ENCODE measurements at regions of chr10 and their contacts with region 1.

Region 1: GRCh38 chr10:118754720-118755480 is at the start of gene CACUL1:
- DNase-seq: peak; percentile 100
- ATAC-seq: peak; percentile 98
- H3K4me3 Mint-ChIP-seq: peak within 1 kb of the TSS; percentile 91
- H3K27ac Mint-ChIP-seq: peak within 1 kb of the TSS; percentile 83
- H3K4me1 Mint-ChIP-seq: peaks cover 33% of the 10 kb centered on the region
- H3K27me3 Mint-ChIP-seq: no peaks in the 10 kb centered on the region
- total RNA-seq, gene CACUL1: 20.1 to 24.4 TPM

Region 2: DNA sequence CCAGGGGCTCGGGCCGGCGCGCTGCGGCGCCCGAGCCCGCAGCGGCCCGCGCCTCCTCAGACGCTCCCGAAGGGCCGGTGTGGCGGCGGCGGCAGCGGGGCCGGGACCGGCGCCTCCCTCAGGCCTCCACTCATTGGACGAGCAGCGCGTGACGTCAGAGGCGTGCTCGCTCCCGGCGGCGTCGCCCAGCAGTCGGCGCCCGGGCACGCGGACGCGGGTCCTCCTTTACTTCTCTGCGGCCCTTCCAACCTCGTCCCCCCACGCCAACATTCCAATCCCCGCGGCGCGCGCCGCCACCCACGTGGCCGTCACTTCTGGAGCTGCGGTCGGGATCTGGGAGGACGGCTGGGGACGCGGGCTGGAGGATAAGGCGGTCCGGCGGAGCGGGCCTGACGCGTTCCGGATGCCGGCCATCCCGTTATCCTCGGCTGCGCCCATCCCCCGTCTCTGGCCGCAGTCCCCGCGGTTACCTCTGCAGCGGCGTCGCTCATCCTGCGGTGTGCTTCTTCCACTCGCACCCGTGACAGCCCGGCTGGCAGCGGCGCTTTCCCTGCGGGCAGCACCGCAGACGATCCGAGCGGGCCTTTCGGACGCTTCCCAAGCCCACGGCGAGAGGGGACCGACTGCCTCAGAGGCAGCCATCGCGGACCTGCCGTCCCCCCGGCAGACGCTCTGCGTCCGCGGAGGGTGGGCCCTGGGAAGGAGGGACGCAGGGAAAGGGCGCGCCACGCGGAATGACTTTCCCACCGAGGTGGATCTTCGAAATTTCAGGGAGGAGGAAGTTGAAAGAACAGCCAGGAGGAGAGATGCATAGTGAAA is 1379.3 kb before region 1 on chr10 and contains the start of gene PDZD8:
- CTCF ChIA-PET with region 1: no interaction called
- POLR2A ChIA-PET with region 1: no interaction called
- intact Hi-C with region 1: loop called in 1 of 2 experiments (anchors 1 kb)
- DNase-seq: peak; percentile 94
- ATAC-seq: peak; percentile 85
- H3K4me3 Mint-ChIP-seq: peak within 1 kb of the TSS; percentile 92
- H3K27ac Mint-ChIP-seq: peak within 1 kb of the TSS; percentile 72
- H3K4me1 Mint-ChIP-seq: peaks cover 29% of the 10 kb centered on the region
- H3K27me3 Mint-ChIP-seq: peaks cover 15% of the 10 kb centered on the region
- total RNA-seq, gene PDZD8: 12.5 to 15.9 TPM

Region 3: GRCh38 chr10:118341791-118342637 is 412.9 kb before region 1 on chr10 and contains the start of gene FAM204A:
- CTCF ChIA-PET with region 1: no interaction called
- POLR2A ChIA-PET with region 1: no interaction called
- intact Hi-C with region 1: loop called (anchors 1 to 5 kb)
- DNase-seq: peak; percentile 96
- ATAC-seq: peak; percentile 98
- H3K4me3 Mint-ChIP-seq: peak within 1 kb of the TSS; percentile 81
- H3K27ac Mint-ChIP-seq: peak within 1 kb of the TSS; percentile 89
- H3K4me1 Mint-ChIP-seq: peaks cover 37% of the 10 kb centered on the region
- H3K27me3 Mint-ChIP-seq: no peaks in the 10 kb centered on the region
- total RNA-seq, gene FAM204A: 44.1 to 55.8 TPM

Region 4: DNA sequence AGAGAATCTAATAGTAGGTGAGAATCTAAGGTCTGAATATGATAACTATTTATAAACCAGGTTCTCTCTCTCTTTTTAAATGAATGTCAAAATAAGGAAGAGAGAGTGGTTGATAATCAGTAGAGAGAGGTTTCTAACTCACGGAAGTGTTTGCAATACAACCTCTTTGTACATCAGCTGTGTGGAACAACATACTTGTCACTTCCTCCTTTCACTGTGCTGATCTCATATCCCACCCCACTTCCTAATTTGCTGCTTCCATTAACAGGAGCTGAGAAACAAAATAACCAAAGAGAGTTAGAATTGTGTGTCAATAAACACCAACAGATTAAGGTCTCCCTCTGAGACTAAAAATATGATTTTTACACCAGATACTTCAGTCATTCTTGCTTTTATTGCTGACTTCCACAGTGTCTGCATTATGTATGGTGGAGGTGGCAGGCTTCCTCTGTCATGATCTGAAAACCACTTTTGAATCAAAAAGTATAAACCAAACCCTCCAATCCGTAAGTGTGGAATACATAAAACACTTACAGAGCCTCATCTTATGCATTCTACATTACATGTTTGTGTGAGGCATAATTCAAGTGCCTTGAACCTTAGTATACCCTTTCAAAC is 25.1 kb before region 1 on chr10:
- CTCF ChIA-PET with region 1: interaction called, 11 read pairs
- POLR2A ChIA-PET with region 1: interaction called, 3 read pairs
- intact Hi-C with region 1: loop called in 1 of 2 experiments (anchors 1 kb)
- DNase-seq: no peak
- ATAC-seq: peak; percentile 31
- H3K4me3 Mint-ChIP-seq: no peak overlapping the region
- H3K27ac Mint-ChIP-seq: no peak overlapping the region
- H3K4me1 Mint-ChIP-seq: peaks cover 57% of the 10 kb centered on the region
- H3K27me3 Mint-ChIP-seq: peaks cover 2% of the 10 kb centered on the region

Region 5: DNA sequence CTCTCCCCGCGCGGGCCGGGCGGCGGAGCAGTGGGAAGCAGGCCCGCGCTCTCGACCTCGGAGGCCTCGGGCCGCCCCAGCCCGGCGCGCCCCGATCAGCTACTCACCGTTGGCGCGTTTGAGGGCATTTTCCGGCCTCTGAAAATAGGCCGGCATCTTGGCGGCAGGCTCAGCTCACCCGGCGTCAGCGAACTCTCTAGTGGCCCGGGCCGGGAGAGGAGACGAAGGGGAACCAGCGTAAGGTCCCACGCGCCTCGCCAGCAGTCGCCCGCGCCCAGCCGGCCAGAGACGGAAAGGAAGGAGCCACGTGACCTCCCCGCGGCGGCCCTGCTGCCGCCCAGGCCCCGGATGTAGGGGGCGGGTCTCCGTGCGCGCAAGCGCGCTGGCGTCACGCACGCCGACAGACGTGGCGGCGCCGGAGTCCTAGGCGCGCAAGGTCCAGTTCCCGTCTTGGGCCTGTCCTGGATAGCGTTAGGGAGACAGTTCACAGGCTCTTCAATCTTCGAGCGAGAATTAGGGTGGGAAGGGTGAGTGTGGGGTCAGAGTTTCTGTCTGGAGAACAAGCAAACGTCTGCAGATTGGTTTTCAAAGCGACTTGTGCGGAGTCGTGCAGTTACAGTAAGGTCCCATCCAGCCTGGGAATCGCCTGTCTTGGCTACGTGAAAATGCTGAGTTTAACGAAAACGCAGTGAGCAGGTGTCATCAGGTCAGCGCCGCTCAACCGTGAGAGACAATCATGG is 325.8 kb after region 1 on chr10 and contains the start of gene EIF3A:
- CTCF ChIA-PET with region 1: no interaction called
- POLR2A ChIA-PET with region 1: no interaction called
- intact Hi-C with region 1: loop called in 1 of 2 experiments (anchors 1 kb)
- DNase-seq: peak; percentile 95
- ATAC-seq: peak; percentile 82
- H3K4me3 Mint-ChIP-seq: peak within 1 kb of the TSS; percentile 99
- H3K27ac Mint-ChIP-seq: peak within 1 kb of the TSS; percentile 94
- H3K4me1 Mint-ChIP-seq: peaks cover 26% of the 10 kb centered on the region
- H3K27me3 Mint-ChIP-seq: no peaks in the 10 kb centered on the region
- total RNA-seq, gene EIF3A: 132 to 150 TPM

Region 6: GRCh38 chr10:119305860-119306513 is 551.1 kb after region 1 on chr10:
- CTCF ChIA-PET with region 1: no interaction called
- POLR2A ChIA-PET with region 1: interaction called, 3 read pairs
- intact Hi-C with region 1: loop called in 1 of 2 experiments (anchors 10 kb)
- DNase-seq: peak; percentile 93
- ATAC-seq: peak; percentile 73
- H3K4me3 Mint-ChIP-seq: peak overlapping the region; percentile 72
- H3K27ac Mint-ChIP-seq: peak overlapping the region; percentile 100
- H3K4me1 Mint-ChIP-seq: peaks cover 79% of the 10 kb centered on the region
- H3K27me3 Mint-ChIP-seq: peaks cover 2% of the 10 kb centered on the region

Region 7: DNA sequence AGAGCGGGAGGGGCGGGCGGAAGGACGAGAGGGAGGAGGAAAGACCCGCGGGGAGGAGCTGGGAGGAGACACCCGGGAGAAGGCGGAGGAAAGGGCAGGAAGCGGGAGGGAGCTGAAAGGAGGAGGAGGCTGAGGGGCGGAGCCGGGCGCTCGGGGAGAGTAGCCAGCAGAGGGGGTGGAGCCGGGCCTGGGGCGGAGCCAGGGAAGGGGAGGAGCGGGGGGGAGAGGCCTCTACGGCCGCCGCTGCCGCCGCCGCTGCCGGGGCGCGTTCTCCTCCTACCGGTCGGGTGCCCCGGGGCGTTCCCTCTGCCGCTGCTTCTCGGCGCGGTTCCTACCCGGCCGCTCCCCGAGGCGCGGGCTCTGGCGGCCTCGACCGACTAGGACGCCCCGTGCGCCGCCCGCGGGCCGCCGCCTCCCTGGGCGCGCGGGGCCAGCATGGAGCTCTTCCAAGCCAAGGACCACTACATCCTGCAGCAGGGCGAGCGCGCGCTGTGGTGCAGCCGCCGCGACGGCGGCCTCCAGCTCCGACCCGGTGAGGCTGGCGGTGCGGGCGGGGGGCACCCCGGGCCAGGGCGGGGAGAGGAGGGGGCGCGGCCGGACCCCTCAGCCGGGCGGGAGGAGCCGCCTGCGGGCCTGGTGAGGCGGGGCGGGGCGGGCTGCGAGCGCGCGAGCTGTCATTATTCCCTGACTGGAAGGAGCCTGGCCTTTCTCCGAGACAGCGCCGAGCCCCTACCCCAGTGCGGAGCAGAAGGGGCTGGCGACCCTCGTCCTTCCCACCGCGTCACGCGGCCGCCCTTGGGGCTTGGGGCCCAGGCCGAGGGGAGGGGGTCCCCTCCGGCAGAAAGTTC is 971.2 kb after region 1 on chr10 and contains the start of gene INPP5F:
- CTCF ChIA-PET with region 1: no interaction called
- POLR2A ChIA-PET with region 1: no interaction called
- intact Hi-C with region 1: loop called in 1 of 2 experiments (anchors 1 kb)
- DNase-seq: peak; percentile 100
- ATAC-seq: peak; percentile 95
- H3K4me3 Mint-ChIP-seq: peak within 1 kb of the TSS; percentile 86
- H3K27ac Mint-ChIP-seq: peak within 1 kb of the TSS; percentile 73
- H3K4me1 Mint-ChIP-seq: peaks cover 47% of the 10 kb centered on the region
- H3K27me3 Mint-ChIP-seq: no peaks in the 10 kb centered on the region
- total RNA-seq, gene INPP5F: 10.9 to 12.6 TPM

Measured in activated CD4-positive, alpha-beta T cell treated with anti-CD3 and anti-CD28 coated beads for 36 hours (primary cell).